ENCODE measurements at regions of chr14 and their contacts with region 1.

Region 1: DNA sequence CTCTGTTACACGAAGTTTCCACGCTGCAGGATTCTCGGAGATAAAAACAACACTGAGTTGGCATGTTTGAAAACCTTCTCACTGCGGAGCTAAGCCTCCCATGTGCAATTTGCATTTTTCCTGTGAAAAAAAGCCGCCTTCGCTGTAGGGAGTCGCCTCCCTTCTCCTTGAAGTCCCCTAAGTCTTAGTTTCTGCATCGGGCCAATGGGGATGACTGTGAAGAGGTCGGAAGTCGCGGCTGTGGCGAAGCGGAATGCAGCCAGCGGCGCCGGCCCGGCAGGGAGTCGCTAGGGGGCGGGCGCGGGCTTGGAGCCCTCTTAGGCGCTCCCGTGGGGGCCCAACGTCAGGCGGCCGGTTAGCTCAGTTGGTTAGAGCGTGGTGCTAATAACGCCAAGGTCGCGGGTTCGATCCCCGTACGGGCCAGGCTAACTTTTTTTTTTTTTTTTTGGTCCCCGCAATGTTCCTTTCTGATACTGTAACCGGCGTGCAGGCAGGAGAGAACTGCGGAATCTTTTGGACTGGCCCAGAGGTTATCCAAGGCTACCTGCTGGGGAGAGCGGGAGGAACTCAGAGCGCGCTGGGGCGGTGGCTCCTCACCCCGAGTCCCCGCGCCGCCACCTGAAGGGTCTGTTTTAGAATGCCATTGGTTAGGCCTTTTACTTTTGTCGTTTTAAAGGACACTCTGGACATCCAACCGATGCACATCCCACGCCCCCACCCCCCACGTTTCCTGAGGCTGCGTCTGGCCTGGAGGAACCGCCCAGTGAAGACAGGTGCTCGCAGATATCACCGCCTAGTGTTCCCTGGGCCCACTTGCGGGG is 2.6 kb upstream of the ZNF839 start:
- DNase-seq: peak; percentile 95
- ATAC-seq: peak; percentile 69
- H3K4me3 ChIP-seq: peak overlapping the region; percentile 58 to 80 (median 69)
- H3K4me3 Mint-ChIP-seq: peak overlapping the region; percentile 96
- H3K27ac ChIP-seq: peak overlapping the region; percentile 43 to 52
- H3K27ac Mint-ChIP-seq: peak overlapping the region; percentile 99
- H3K4me1 ChIP-seq: peaks cover 38 to 53% of the 10 kb centered on the region in 2 donors
- H3K4me1 Mint-ChIP-seq: peaks cover 59% of the 10 kb centered on the region
- H3K27me3 ChIP-seq: no peaks in the 10 kb centered on the region
- H3K27me3 Mint-ChIP-seq: no peaks in the 10 kb centered on the region
- CTCF ChIP-seq: peak; percentile 78

Region 2: GRCh38 chr14:101947906-101948665 is 368.9 kb before region 1 on chr14:
- CTCF ChIA-PET with region 1: interaction called, 3 read pairs
- POLR2A ChIA-PET with region 1: no interaction called
- intact Hi-C with region 1: loop called (anchors 1 kb)
- DNase-seq: peak; percentile 100
- ATAC-seq: peak; percentile 96
- H3K4me3 ChIP-seq: peak overlapping the region; percentile 80 to 99 (median 91)
- H3K4me3 Mint-ChIP-seq: peak overlapping the region; percentile 97
- H3K27ac ChIP-seq: peak overlapping the region; percentile 97 to 99
- H3K27ac Mint-ChIP-seq: peak overlapping the region; percentile 99
- H3K4me1 ChIP-seq: peaks cover 10 to 18% of the 10 kb centered on the region in 2 donors
- H3K4me1 Mint-ChIP-seq: peaks cover 23% of the 10 kb centered on the region
- H3K27me3 ChIP-seq: peaks cover 0 to 13% (median 2%) of the 10 kb centered on the region in 4 experiments
- H3K27me3 Mint-ChIP-seq: peaks cover 25% of the 10 kb centered on the region
- CTCF ChIP-seq: no peak

Region 3: GRCh38 chr14:101997429-101998336 is 319.3 kb before region 1 on chr14:
- CTCF ChIA-PET with region 1: no interaction called
- POLR2A ChIA-PET with region 1: no interaction called
- intact Hi-C with region 1: no loop called
- DNase-seq: no peak
- ATAC-seq: no peak
- H3K4me3 ChIP-seq: no peak overlapping the region
- H3K4me3 Mint-ChIP-seq: no peak overlapping the region
- H3K27ac ChIP-seq: no peak overlapping the region
- H3K27ac Mint-ChIP-seq: no peak overlapping the region
- H3K4me1 ChIP-seq: peaks cover 5 to 6% of the 10 kb centered on the region in 2 donors
- H3K4me1 Mint-ChIP-seq: peaks cover 11% of the 10 kb centered on the region
- H3K27me3 ChIP-seq: no peaks in the 10 kb centered on the region
- H3K27me3 Mint-ChIP-seq: no peaks in the 10 kb centered on the region
- CTCF ChIP-seq: no peak

Region 4: GRCh38 chr14:102086972-102087761 is 229.8 kb before region 1 on chr14 and contains the start of gene HSP90AA1:
- CTCF ChIA-PET with region 1: interaction called, 3 read pairs
- POLR2A ChIA-PET with region 1: interaction called, 4 read pairs
- intact Hi-C with region 1: loop called (anchors 1 kb)
- DNase-seq: peak; percentile 97
- ATAC-seq: peak; percentile 70
- H3K4me3 ChIP-seq: peak within 1 kb of the TSS; percentile 79 to 91 (median 84)
- H3K4me3 Mint-ChIP-seq: peak within 1 kb of the TSS; percentile 95
- H3K27ac ChIP-seq: peak within 1 kb of the TSS; percentile 96 to 98
- H3K27ac Mint-ChIP-seq: peak within 1 kb of the TSS; percentile 96
- H3K4me1 ChIP-seq: peaks cover 18 to 28% of the 10 kb centered on the region in 2 donors
- H3K4me1 Mint-ChIP-seq: peaks cover 55% of the 10 kb centered on the region
- H3K27me3 ChIP-seq: no peaks in the 10 kb centered on the region
- H3K27me3 Mint-ChIP-seq: no peaks in the 10 kb centered on the region
- CTCF ChIP-seq: no peak
- total RNA-seq, gene HSP90AA1: 222 and 225 TPM in 2 replicates

Region 5: GRCh38 chr14:102235275-102235897 is 81.6 kb before region 1 on chr14:
- CTCF ChIA-PET with region 1: interaction called, 9 read pairs
- POLR2A ChIA-PET with region 1: no interaction called
- intact Hi-C with region 1: loop called (anchors 1 kb)
- DNase-seq: peak; percentile 74
- ATAC-seq: peak; percentile 90
- H3K4me3 ChIP-seq: peak overlapping the region in 1 of 5 experiments; percentile 30
- H3K4me3 Mint-ChIP-seq: no peak overlapping the region
- H3K27ac ChIP-seq: no peak overlapping the region
- H3K27ac Mint-ChIP-seq: no peak overlapping the region
- H3K4me1 ChIP-seq: peaks cover 0 to 6% of the 10 kb centered on the region in 2 donors
- H3K4me1 Mint-ChIP-seq: no peaks in the 10 kb centered on the region
- H3K27me3 ChIP-seq: peaks cover 0 to 4% (median under 1%) of the 10 kb centered on the region in 4 experiments
- H3K27me3 Mint-ChIP-seq: no peaks in the 10 kb centered on the region
- CTCF ChIP-seq: peak; percentile 83

Region 6: GRCh38 chr14:102272392-102272791 is 44.6 kb before region 1 on chr14:
- CTCF ChIA-PET with region 1: no interaction called
- POLR2A ChIA-PET with region 1: no interaction called
- intact Hi-C with region 1: no loop called
- DNase-seq: no peak
- ATAC-seq: no peak
- H3K4me3 ChIP-seq: no peak overlapping the region
- H3K4me3 Mint-ChIP-seq: no peak overlapping the region
- H3K27ac ChIP-seq: no peak overlapping the region
- H3K27ac Mint-ChIP-seq: no peak overlapping the region
- H3K4me1 ChIP-seq: no peaks in the 10 kb centered on the region
- H3K4me1 Mint-ChIP-seq: no peaks in the 10 kb centered on the region
- H3K27me3 ChIP-seq: no peaks in the 10 kb centered on the region
- H3K27me3 Mint-ChIP-seq: no peaks in the 10 kb centered on the region
- CTCF ChIP-seq: no peak

Region 7: GRCh38 chr14:102341566-102341965 is 24.6 kb after region 1 on chr14:
- CTCF ChIA-PET with region 1: no interaction called
- POLR2A ChIA-PET with region 1: no interaction called
- intact Hi-C with region 1: no loop called
- DNase-seq: no peak
- ATAC-seq: no peak
- H3K4me3 ChIP-seq: no peak overlapping the region
- H3K4me3 Mint-ChIP-seq: no peak overlapping the region
- H3K27ac ChIP-seq: no peak overlapping the region
- H3K27ac Mint-ChIP-seq: no peak overlapping the region
- H3K4me1 ChIP-seq: no peaks in the 10 kb centered on the region
- H3K4me1 Mint-ChIP-seq: no peaks in the 10 kb centered on the region
- H3K27me3 ChIP-seq: no peaks in the 10 kb centered on the region
- H3K27me3 Mint-ChIP-seq: no peaks in the 10 kb centered on the region
- CTCF ChIP-seq: no peak

Region 8: DNA sequence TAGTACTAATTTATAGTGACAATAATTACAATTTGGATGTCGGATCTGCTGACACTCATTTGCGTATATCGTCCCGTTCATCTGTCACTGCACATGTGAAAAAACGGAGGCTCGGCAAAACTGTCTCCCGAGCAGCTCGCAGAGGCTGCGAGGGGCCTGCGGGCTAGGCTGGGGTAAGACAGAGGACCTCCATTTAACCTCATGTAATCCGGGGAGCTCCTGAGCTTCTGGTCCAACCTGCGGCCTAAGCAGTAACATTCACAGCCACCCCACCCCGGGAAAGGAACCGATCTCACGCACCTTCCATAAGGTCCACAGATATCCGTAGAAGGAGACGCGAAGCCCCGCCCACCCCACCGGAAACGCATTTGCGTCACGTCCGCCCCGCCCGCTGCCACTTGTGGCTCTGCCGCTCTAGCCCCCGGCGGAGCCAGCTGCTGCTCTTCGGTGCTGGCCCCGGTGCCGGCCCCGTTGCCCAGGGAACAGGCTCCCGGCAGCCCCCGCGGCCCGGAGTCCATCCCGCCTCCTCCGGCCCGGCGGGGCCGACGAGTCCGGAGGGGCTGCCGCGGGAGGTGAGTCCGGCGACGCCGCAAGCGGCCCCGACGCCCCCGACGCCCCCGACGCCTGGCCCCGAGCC is 45.7 kb after region 1 on chr14 and contains the starts of genes CINP and TECPR2:
- CTCF ChIA-PET with region 1: interaction called, 11 read pairs
- POLR2A ChIA-PET with region 1: interaction called, 3 read pairs
- intact Hi-C with region 1: loop called (anchors 1 kb)
- DNase-seq: peak; percentile 95
- ATAC-seq: peak; percentile 97
- H3K4me3 ChIP-seq: peak within 1 kb of the TSS; percentile 55 to 90 (median 82)
- H3K4me3 Mint-ChIP-seq: no peak within 1 kb of the TSS
- H3K27ac ChIP-seq: peak within 1 kb of the TSS; percentile 61 to 93
- H3K27ac Mint-ChIP-seq: peak within 1 kb of the TSS; percentile 92
- H3K4me1 ChIP-seq: peaks cover 16 to 18% of the 10 kb centered on the region in 2 donors
- H3K4me1 Mint-ChIP-seq: peaks cover 25% of the 10 kb centered on the region
- H3K27me3 ChIP-seq: no peaks in the 10 kb centered on the region
- H3K27me3 Mint-ChIP-seq: no peaks in the 10 kb centered on the region
- CTCF ChIP-seq: no peak
- total RNA-seq, gene CINP: 23.7 and 28.8 TPM in 2 replicates
- total RNA-seq, gene TECPR2: 10.8 and 11.2 TPM in 2 replicates

Region 9: DNA sequence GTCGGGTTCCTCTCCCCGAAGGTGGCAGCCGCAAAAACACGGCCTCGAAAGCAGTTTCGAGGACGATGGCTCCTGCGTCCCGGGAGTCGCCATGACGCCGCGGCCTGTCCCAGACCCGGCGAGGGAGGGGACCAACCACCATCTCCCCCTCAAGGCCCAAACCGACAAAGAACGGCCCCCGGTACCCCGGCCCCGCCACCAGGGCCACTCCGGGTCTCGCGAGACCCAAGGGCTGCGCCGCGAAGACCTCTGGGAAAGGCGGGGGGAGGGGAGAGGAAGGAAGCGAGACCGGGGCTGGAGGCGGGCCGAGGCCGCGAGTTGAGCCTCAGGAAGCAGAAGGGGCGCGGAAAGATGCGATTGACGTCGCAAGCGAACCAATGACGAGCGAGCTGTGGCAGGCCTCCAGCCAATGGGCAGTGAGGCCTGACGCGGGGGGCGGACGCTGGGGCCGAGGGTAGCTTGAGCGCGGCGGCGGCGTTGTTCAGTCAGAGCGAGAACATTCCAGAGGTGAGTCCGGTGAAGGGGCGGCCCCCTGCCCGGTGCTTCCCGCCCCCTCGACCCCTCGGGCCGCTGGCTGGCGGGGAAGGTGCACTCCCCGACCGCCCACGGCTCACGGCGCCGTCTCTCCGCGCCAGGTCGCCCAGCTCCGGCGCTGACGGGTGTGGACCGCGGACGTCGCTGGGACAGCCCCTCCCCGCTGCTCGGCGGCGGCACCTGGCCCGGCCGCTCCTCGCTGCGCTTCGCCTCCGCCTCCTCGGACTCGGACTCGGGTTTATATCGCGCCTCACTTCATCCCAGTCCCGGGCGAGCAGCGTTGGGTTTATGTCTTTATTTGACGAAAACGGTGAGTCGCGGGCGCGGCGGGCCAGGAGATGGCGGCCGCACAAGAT is 1017.0 kb after region 1 on chr14 and contains the start of gene EIF5:
- CTCF ChIA-PET with region 1: no interaction called
- POLR2A ChIA-PET with region 1: interaction called, 3 read pairs
- intact Hi-C with region 1: loop called (anchors 5 kb)
- DNase-seq: peak; percentile 100
- ATAC-seq: peak; percentile 85
- H3K4me3 ChIP-seq: peak within 1 kb of the TSS; percentile 78 to 100 (median 94)
- H3K4me3 Mint-ChIP-seq: peak within 1 kb of the TSS; percentile 96
- H3K27ac ChIP-seq: peak within 1 kb of the TSS; percentile 98 to 99
- H3K27ac Mint-ChIP-seq: peak within 1 kb of the TSS; percentile 100
- H3K4me1 ChIP-seq: peaks cover 17 to 25% of the 10 kb centered on the region in 2 donors
- H3K4me1 Mint-ChIP-seq: peaks cover 42% of the 10 kb centered on the region
- H3K27me3 ChIP-seq: no peaks in the 10 kb centered on the region
- H3K27me3 Mint-ChIP-seq: no peaks in the 10 kb centered on the region
- CTCF ChIP-seq: peak; percentile 51
- total RNA-seq, gene EIF5: 314 TPM in 2 replicates

Measured in B cell (primary cell).